Caco-2 (cell line): ENCODE measurements at regions of chr4 and their contacts with region 1.

Region 1: GRCh38 chr4:145618932-145619638 is at the start of gene MMAA:
- DNase-seq: peak; percentile 95 to 96
- H3K4me3 ChIP-seq: peak within 1 kb of the TSS; percentile 67
- H3K4me3 Mint-ChIP-seq: peak within 1 kb of the TSS; percentile 94
- H3K27ac Mint-ChIP-seq: peak within 1 kb of the TSS; percentile 97
- H3K4me1 ChIP-seq: peaks cover 14% of the 10 kb centered on the region; the same call in 1 of the 2 replicates
- H3K4me1 Mint-ChIP-seq: no peaks in the 10 kb centered on the region
- H3K27me3 ChIP-seq: no peaks in the 10 kb centered on the region
- H3K27me3 Mint-ChIP-seq: peaks cover 2% of the 10 kb centered on the region
- CTCF ChIP-seq: peak; percentile 44 to 54
- total RNA-seq, gene MMAA: 1.7 and 3.3 TPM in 2 replicates

Region 2: GRCh38 chr4:145097821-145098674 is 521.0 kb before region 1 on chr4 and contains the starts of genes ABCE1 and ANAPC10:
- CTCF ChIA-PET with region 1: no interaction called
- POLR2A ChIA-PET with region 1: no interaction called
- intact Hi-C with region 1: loop called (anchors 5 kb)
- DNase-seq: peak; percentile 94 to 95
- H3K4me3 ChIP-seq: peak within 1 kb of the TSS; percentile 87
- H3K4me3 Mint-ChIP-seq: peak within 1 kb of the TSS; percentile 93
- H3K27ac Mint-ChIP-seq: peak within 1 kb of the TSS; percentile 98
- H3K4me1 ChIP-seq: no peaks in the 10 kb centered on the region
- H3K4me1 Mint-ChIP-seq: no peaks in the 10 kb centered on the region
- H3K27me3 ChIP-seq: no peaks in the 10 kb centered on the region
- H3K27me3 Mint-ChIP-seq: no peaks in the 10 kb centered on the region
- CTCF ChIP-seq: no peak
- total RNA-seq, gene ABCE1: 96.7 and 100 TPM in 2 replicates
- total RNA-seq, gene ANAPC10: 24.2 and 26.9 TPM in 2 replicates

Region 3: GRCh38 chr4:145180298-145181090 is 438.6 kb before region 1 on chr4 and contains the start of gene OTUD4:
- CTCF ChIA-PET with region 1: no interaction called
- POLR2A ChIA-PET with region 1: no interaction called
- intact Hi-C with region 1: loop called (anchors 1 kb)
- DNase-seq: peak; percentile 94 to 95
- H3K4me3 ChIP-seq: peak within 1 kb of the TSS; percentile 63
- H3K4me3 Mint-ChIP-seq: peak within 1 kb of the TSS; percentile 89
- H3K27ac Mint-ChIP-seq: peak within 1 kb of the TSS; percentile 87
- H3K4me1 ChIP-seq: peaks cover 9% of the 10 kb centered on the region; the same call in 1 of the 2 replicates
- H3K4me1 Mint-ChIP-seq: peaks cover 10% of the 10 kb centered on the region
- H3K27me3 ChIP-seq: no peaks in the 10 kb centered on the region
- H3K27me3 Mint-ChIP-seq: no peaks in the 10 kb centered on the region
- CTCF ChIP-seq: peak in 1 of 2 experiments; percentile 26
- total RNA-seq, gene OTUD4: 32.8 and 34.5 TPM in 2 replicates

Region 4: GRCh38 chr4:145234091-145234706 is 384.9 kb before region 1 on chr4:
- CTCF ChIA-PET with region 1: interaction called, 6 read pairs
- POLR2A ChIA-PET with region 1: no interaction called
- intact Hi-C with region 1: loop called (anchors 1 kb)
- DNase-seq: peak; percentile 52 to 67
- H3K4me3 ChIP-seq: no peak overlapping the region
- H3K4me3 Mint-ChIP-seq: no peak overlapping the region
- H3K27ac Mint-ChIP-seq: no peak overlapping the region
- H3K4me1 ChIP-seq: no peaks in the 10 kb centered on the region
- H3K4me1 Mint-ChIP-seq: no peaks in the 10 kb centered on the region
- H3K27me3 ChIP-seq: no peaks in the 10 kb centered on the region
- H3K27me3 Mint-ChIP-seq: peaks cover 6% of the 10 kb centered on the region
- CTCF ChIP-seq: peak; percentile 73 to 82

Region 5: GRCh38 chr4:145732895-145733880 is 114.1 kb after region 1 on chr4:
- CTCF ChIA-PET with region 1: no interaction called
- POLR2A ChIA-PET with region 1: no interaction called
- intact Hi-C with region 1: loop called (anchors 1 kb)
- DNase-seq: peak; percentile 93
- H3K4me3 ChIP-seq: peak overlapping the region; percentile 63
- H3K4me3 Mint-ChIP-seq: peak overlapping the region; percentile 84
- H3K27ac Mint-ChIP-seq: peak overlapping the region; percentile 89
- H3K4me1 ChIP-seq: peaks cover 49% of the 10 kb centered on the region
- H3K4me1 Mint-ChIP-seq: peaks cover 27% of the 10 kb centered on the region
- H3K27me3 ChIP-seq: no peaks in the 10 kb centered on the region
- H3K27me3 Mint-ChIP-seq: no peaks in the 10 kb centered on the region
- CTCF ChIP-seq: no peak